MCF 10A (cell line): ENCODE measurements at regions of chr1 and their contacts with region 1.

Region 1: GRCh38 chr1:217188280-217189237 is 442.3 kb downstream of the GPATCH2 start:
- DNase-seq: peak; percentile 60
- H3K4me3 Mint-ChIP-seq: no peak overlapping the region
- H3K27ac Mint-ChIP-seq: no peak overlapping the region
- H3K4me1 Mint-ChIP-seq: no peaks in the 10 kb centered on the region
- H3K27me3 Mint-ChIP-seq: no peaks in the 10 kb centered on the region
- CTCF ChIP-seq: no peak

Region 2: GRCh38 chr1:217140041-217140901 is 48.3 kb before region 1 on chr1:
- CTCF ChIA-PET with region 1: no interaction called
- POLR2A ChIA-PET with region 1: no interaction called
- intact Hi-C with region 1: loop called (anchors 5 kb)
- DNase-seq: no peak
- H3K4me3 Mint-ChIP-seq: no peak overlapping the region
- H3K27ac Mint-ChIP-seq: no peak overlapping the region
- H3K4me1 Mint-ChIP-seq: peaks cover 2% of the 10 kb centered on the region
- H3K27me3 Mint-ChIP-seq: no peaks in the 10 kb centered on the region
- CTCF ChIP-seq: no peak

Region 3: GRCh38 chr1:217211486-217211885 is 22.9 kb after region 1 on chr1:
- CTCF ChIA-PET with region 1: no interaction called
- POLR2A ChIA-PET with region 1: no interaction called
- intact Hi-C with region 1: no loop called
- DNase-seq: no peak
- H3K4me3 Mint-ChIP-seq: no peak overlapping the region
- H3K27ac Mint-ChIP-seq: no peak overlapping the region
- H3K4me1 Mint-ChIP-seq: no peaks in the 10 kb centered on the region
- H3K27me3 Mint-ChIP-seq: no peaks in the 10 kb centered on the region
- CTCF ChIP-seq: no peak